Adrenal gland (tissue), 19 donors: ENCODE measurements at regions of chr5 and their contacts with region 1.

Region 1: GRCh38 chr5:54217826-54218503 is 92.4 kb downstream of the ARL15 start:
- DNase-seq: peak in 5 of 7 donors; percentile 15 to 68 (median 48)
- H3K4me3 ChIP-seq: no peak overlapping the region
- H3K27ac ChIP-seq: no peak overlapping the region
- H3K4me1 ChIP-seq: no peaks in the 10 kb centered on the region
- H3K27me3 ChIP-seq: no peaks in the 10 kb centered on the region
- CTCF ChIP-seq: peak; percentile 63 to 91 (median 84)
- POLR2A ChIP-seq: no peak

Region 2: DNA sequence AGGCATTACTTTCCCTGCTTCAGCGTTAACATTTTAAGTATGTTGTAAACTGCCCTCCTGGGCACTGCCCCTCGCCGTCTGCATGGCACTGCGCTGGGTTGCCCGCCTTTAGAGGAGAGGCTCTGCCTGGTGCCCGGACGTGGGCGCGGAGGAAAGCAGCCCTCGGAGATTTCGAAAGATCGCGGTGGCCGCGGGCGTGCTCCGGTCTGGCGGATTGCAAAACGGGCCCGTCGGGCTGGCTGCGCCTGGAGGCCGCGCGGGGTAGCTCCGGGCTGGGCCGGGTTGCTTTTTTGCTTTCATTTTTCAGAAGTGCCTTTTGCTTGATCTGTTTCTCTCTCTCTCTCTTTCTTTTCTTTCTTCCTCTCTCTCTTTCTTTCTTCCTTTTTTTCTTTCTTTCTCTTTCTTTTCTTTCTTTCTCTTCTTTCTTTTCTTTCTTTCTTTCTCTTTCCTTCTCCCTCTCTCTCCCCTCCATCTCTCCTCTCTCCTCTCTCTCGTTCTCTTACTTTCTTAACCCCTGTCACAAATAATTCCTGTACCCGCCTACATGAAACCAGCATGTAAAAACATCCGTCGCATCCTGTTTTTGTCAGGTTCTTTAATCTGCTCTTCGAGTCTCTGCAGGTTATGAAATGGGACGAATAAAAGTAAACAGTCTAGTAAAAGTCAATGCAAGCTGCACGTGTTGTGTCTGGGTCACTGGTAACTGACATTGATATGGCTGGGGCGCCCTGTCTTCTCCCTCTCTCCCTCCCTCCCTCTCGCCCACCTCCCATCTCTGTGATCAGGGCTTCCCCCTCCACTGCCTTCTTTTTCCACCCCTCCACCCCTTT is 735.9 kb before region 1 on chr5:
- intact Hi-C with region 1: loop called in 1 of 2 experiments (anchors 10 kb)
- DNase-seq: peak; percentile 70 to 85 (median 81)
- H3K4me3 ChIP-seq: peak overlapping the region in 3 of 4 donors; percentile 13 to 82 (median 59)
- H3K27ac ChIP-seq: peak overlapping the region in 2 of 5 donors; percentile 6 to 41
- H3K4me1 ChIP-seq: peaks cover 0 to 17% of the 10 kb centered on the region in 2 donors
- H3K27me3 ChIP-seq: no peaks in the 10 kb centered on the region
- CTCF ChIP-seq: peak; percentile 25 to 70 (median 56)
- POLR2A ChIP-seq: no peak

Region 3: DNA sequence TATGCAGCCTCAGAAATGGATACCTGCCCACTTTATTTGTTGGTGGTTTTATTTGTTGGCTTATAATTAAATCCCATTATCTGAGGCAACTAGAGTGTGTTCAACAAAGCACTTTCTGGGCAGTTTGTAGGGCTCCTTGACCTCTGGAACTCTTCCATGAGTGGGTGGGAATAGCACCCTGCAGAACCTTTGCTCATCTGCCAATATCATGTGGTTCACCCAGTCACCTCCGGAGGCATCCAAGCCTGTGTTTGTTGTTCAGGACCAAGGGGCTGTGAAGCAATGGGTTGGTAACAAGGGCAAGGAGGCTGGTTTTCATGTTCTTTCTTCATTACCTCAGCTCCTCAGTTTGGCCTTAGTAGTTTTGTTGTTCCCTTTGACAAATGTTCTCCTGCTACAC is 343.6 kb before region 1 on chr5:
- intact Hi-C with region 1: loop called in 1 of 2 experiments (anchors 10 kb)
- DNase-seq: peak in 1 of 7 donors; percentile 25
- H3K4me3 ChIP-seq: no peak overlapping the region
- H3K27ac ChIP-seq: no peak overlapping the region
- H3K4me1 ChIP-seq: no peaks in the 10 kb centered on the region
- H3K27me3 ChIP-seq: no peaks in the 10 kb centered on the region
- CTCF ChIP-seq: peak in 1 of 6 experiments; percentile 10
- POLR2A ChIP-seq: no peak

Region 4: GRCh38 chr5:54040804-54041203 is 177.2 kb before region 1 on chr5:
- intact Hi-C with region 1: no loop called
- DNase-seq: no peak
- H3K4me3 ChIP-seq: no peak overlapping the region
- H3K27ac ChIP-seq: no peak overlapping the region
- H3K4me1 ChIP-seq: peaks cover 0 to 9% of the 10 kb centered on the region in 2 donors
- H3K27me3 ChIP-seq: no peaks in the 10 kb centered on the region
- CTCF ChIP-seq: no peak
- POLR2A ChIP-seq: no peak

Region 5: DNA sequence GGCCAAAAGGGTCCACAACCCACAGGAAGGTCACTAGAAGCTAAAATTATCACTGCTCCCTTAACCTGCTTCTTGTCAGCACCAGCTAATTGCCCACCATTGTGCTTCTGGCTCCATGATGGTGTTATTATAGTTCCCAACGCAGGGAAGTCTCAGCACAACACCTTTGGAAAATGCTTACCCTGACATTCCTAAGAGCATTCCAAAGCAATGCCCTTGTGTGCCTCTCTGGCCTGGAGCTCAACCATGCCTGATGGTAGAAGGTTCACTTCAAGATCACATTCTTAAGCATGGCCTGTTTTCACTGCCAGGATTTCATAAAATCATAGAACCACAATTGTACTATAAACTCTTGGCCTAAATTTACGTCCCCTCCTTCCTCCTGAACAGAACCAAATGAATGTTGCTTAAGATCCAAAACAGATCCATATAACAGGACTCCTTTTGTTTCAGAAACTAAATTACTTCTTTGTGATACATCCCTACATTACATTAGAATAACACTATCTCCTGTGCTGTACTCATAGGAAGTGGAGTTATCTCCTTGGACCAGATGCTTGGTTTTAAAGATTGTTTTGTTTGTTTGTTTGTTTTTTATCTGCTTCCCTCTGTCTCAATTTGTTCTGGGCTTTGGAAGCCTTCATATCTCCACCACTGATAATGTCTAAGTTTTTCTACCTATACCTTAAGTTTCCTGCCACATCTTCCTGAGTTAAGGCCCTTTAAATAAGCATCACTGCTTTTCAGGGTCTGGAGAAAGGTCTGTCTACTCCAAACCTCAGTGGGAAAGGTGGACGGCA is 60.3 kb after region 1 on chr5:
- intact Hi-C with region 1: no loop called
- DNase-seq: no peak
- H3K4me3 ChIP-seq: no peak overlapping the region
- H3K27ac ChIP-seq: peak overlapping the region in 1 of 5 donors; percentile 24
- H3K4me1 ChIP-seq: peaks cover 0 to 2% of the 10 kb centered on the region in 2 donors
- H3K27me3 ChIP-seq: no peaks in the 10 kb centered on the region
- CTCF ChIP-seq: no peak
- POLR2A ChIP-seq: no peak